ENCODE measurements at regions of chr1 and their contacts with region 1.

Region 1: DNA sequence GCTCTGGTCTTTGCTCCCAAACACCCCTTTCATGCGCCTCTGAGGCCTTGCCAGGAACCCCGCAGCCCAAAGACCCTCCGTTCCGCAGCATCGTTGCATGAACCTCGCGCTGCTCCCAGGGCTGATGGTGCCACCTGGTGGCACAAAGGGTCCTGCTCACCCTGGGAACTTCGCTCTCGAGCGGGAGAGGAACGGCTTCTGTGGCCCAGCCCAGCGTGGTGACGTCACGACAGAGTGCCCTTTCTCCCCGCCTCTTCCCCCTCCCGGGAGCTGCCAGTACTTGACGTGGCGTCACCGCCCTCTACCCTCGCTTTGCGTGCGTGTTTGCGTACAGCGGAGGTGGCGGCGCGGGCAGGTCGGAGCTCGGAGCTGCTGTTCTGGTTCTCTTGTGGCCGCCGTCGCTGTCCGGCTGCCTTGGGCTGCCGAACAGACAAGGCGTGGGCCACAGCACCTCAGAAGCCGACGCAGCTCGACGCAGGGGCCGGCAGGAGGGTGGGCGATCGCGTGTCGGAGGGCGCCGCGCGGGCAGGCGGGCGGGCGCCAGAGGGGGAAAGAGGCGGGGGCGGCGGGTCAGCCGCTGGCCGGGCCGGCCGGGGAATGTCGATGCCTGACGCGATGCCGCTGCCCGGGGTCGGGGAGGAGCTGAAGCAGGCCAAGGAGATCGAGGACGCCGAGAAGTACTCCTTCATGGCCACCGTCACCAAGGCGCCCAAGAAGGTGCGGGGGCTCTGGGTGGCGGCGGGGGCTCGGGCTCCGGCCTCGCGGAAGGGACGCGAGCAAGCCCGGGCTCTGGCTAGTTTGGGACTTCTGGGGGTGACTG is at the start of gene AHCYL1:
- DNase-seq: peak; percentile 99
- H3K4me3 Mint-ChIP-seq: peak within 1 kb of the TSS; percentile 93
- H3K27ac Mint-ChIP-seq: peak within 1 kb of the TSS; percentile 97
- H3K4me1 Mint-ChIP-seq: peaks cover 36% of the 10 kb centered on the region
- H3K27me3 Mint-ChIP-seq: peaks cover 4% of the 10 kb centered on the region
- total RNA-seq, gene AHCYL1: 63.8 and 64.1 TPM in 2 replicates

Region 2: GRCh38 chr1:109438798-109439297 is 545.8 kb before region 1 on chr1:
- intact Hi-C with region 1: no loop called
- DNase-seq: no peak
- H3K4me3 Mint-ChIP-seq: no peak overlapping the region
- H3K27ac Mint-ChIP-seq: no peak overlapping the region
- H3K4me1 Mint-ChIP-seq: no peaks in the 10 kb centered on the region
- H3K27me3 Mint-ChIP-seq: peaks cover 3% of the 10 kb centered on the region

Region 3: DNA sequence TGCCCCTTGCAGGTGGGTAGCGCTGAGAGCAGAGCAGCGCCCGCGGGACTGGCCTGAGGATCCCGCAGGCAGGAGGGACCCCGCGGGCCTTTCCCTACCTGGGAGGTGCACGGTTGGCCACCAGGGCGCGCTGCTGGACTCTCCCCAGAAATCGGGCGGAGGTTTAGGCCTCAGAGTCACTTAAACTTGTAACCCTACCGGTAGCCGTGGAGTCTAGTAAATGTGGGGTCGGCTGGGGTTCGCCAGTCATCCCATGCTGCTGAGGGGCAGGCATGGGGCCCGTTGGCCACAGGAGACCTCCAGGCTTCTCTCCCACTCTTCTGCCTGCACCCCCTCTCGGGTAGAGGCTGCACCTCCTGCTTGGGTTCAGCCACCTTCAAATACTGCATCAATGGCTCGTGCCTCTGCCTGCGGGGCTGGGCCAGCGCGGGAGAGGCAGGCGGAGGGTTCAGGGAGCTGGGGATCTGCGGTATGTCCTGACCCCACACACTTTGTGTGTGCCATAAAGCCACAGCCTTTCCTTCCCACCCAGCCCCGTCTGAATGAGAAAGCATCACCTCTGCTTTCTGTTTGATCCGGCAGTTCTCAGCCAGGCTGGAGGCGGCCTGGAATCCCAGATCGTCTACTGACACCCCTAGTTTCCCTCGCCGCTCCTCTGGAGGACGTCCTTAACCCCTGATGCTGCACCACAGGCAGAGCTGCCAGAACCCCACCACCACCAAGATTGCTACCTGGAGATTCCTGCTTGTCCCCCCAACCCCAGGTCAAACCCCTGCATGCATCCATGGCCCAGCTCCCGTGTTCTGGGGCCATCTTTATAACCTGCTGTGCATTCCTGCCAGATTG is 341.1 kb before region 1 on chr1:
- intact Hi-C with region 1: loop called (anchors 1 kb)
- DNase-seq: peak; percentile 82
- H3K4me3 Mint-ChIP-seq: no peak overlapping the region
- H3K27ac Mint-ChIP-seq: no peak overlapping the region
- H3K4me1 Mint-ChIP-seq: peaks cover 14% of the 10 kb centered on the region
- H3K27me3 Mint-ChIP-seq: peaks cover 5% of the 10 kb centered on the region

Region 4: GRCh38 chr1:109687616-109688499 is 296.8 kb before region 1 on chr1 and contains the start of gene GSTM1:
- intact Hi-C with region 1: loop called (anchors 2 kb)
- DNase-seq: peak; percentile 86
- H3K4me3 Mint-ChIP-seq: peak within 1 kb of the TSS; percentile 93
- H3K27ac Mint-ChIP-seq: peak within 1 kb of the TSS; percentile 98
- H3K4me1 Mint-ChIP-seq: peaks cover 20% of the 10 kb centered on the region
- H3K27me3 Mint-ChIP-seq: peaks cover 4% of the 10 kb centered on the region
- total RNA-seq, gene GSTM1: 77.4 and 86.4 TPM in 2 replicates

Region 5: GRCh38 chr1:109739738-109740660 is 244.7 kb before region 1 on chr1:
- intact Hi-C with region 1: loop called (anchors 1 kb)
- DNase-seq: peak; percentile 79
- H3K4me3 Mint-ChIP-seq: peak overlapping the region; percentile 77
- H3K27ac Mint-ChIP-seq: peak overlapping the region; percentile 47
- H3K4me1 Mint-ChIP-seq: peaks cover 14% of the 10 kb centered on the region
- H3K27me3 Mint-ChIP-seq: peaks cover 27% of the 10 kb centered on the region

Region 6: DNA sequence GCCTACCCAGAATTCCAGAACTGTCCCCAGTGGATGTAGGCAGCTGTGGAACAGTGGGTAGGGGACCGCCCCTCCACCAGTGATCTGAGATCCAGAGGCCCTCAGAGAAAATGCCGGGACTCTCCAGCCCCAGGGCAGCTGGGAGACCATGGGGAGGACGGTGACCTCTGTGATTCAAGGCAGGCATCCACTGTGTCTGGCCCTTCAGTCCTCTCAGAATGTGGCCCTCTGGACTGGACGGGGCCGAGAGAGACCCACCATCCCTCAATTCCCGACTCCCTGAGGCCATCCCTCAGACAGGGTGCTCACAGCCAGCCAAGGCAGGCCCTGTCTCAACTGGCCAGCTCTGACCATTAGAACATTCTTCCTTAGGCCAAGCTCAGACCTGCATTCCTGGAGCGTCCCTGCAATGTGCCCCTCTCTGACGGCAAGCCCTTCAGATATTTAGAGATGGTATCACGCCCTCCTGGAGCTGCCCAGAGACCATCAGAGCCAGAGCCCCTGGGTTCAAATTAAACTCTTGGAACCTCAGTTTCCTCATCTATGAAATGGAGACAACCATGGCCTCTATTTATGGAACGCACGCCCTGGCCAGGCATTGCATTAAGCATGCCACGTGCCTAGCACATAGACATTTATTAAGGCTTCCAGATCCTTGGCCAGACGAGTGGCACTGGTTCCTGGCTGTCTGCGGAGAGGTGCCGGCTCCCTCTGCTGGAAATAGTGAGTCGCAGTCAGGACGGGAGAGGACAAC is 211.3 kb before region 1 on chr1:
- intact Hi-C with region 1: loop called (anchors 1 kb)
- DNase-seq: peak; percentile 65
- H3K4me3 Mint-ChIP-seq: no peak overlapping the region
- H3K27ac Mint-ChIP-seq: peak overlapping the region; percentile 15
- H3K4me1 Mint-ChIP-seq: peaks cover 23% of the 10 kb centered on the region
- H3K27me3 Mint-ChIP-seq: peaks cover 9% of the 10 kb centered on the region

Region 7: DNA sequence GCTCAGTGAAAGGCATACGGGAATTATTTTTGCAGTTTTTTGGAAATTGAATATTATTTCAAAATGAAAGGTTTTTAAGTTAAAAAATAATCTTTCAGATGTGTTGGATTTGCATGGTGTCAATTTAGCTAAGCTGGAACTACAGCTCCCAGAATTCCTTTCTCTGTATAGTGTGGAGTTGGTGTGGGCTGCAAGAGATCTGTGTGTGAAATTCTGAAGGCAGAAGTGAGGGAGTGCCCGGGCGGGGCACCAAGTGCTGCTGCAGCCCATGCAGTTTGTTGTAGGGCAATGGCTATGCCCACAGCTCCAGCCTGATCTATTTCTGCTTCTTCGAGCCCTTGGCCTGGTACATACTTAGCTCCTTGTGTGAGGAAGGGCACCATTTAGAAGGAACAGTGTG is 134.5 kb before region 1 on chr1:
- intact Hi-C with region 1: no loop called
- DNase-seq: no peak
- H3K4me3 Mint-ChIP-seq: no peak overlapping the region
- H3K27ac Mint-ChIP-seq: no peak overlapping the region
- H3K4me1 Mint-ChIP-seq: no peaks in the 10 kb centered on the region
- H3K27me3 Mint-ChIP-seq: peaks cover 2% of the 10 kb centered on the region

Region 8: GRCh38 chr1:109890115-109890953 is 94.3 kb before region 1 on chr1:
- intact Hi-C with region 1: loop called (anchors 1 kb)
- DNase-seq: no peak
- H3K4me3 Mint-ChIP-seq: peak overlapping the region; percentile 34
- H3K27ac Mint-ChIP-seq: peak overlapping the region; percentile 85
- H3K4me1 Mint-ChIP-seq: peaks cover 13% of the 10 kb centered on the region
- H3K27me3 Mint-ChIP-seq: no peaks in the 10 kb centered on the region

Region 9: GRCh38 chr1:110011527-110012041 is 26.9 kb after region 1 on chr1:
- intact Hi-C with region 1: loop called (anchors 1 kb)
- DNase-seq: peak; percentile 35
- H3K4me3 Mint-ChIP-seq: no peak overlapping the region
- H3K27ac Mint-ChIP-seq: no peak overlapping the region
- H3K4me1 Mint-ChIP-seq: peaks cover 5% of the 10 kb centered on the region
- H3K27me3 Mint-ChIP-seq: no peaks in the 10 kb centered on the region